Activated B cell treated with CpG ODN at 0.5 μM for 24 hours (primary cell): ENCODE measurements at regions of chr15 and their contacts with region 1.

Region 1: GRCh38 chr15:38129531-38130204 is 123.0 kb upstream of the SPRED1 start:
- DNase-seq: no peak
- ATAC-seq: peak; percentile 77
- H3K4me3 Mint-ChIP-seq: peak overlapping the region; percentile 71
- H3K27ac Mint-ChIP-seq: peak overlapping the region; percentile 1
- H3K4me1 Mint-ChIP-seq: peaks cover 23% of the 10 kb centered on the region
- H3K27me3 Mint-ChIP-seq: no peaks in the 10 kb centered on the region
- CTCF ChIP-seq: no peak

Region 2: DNA sequence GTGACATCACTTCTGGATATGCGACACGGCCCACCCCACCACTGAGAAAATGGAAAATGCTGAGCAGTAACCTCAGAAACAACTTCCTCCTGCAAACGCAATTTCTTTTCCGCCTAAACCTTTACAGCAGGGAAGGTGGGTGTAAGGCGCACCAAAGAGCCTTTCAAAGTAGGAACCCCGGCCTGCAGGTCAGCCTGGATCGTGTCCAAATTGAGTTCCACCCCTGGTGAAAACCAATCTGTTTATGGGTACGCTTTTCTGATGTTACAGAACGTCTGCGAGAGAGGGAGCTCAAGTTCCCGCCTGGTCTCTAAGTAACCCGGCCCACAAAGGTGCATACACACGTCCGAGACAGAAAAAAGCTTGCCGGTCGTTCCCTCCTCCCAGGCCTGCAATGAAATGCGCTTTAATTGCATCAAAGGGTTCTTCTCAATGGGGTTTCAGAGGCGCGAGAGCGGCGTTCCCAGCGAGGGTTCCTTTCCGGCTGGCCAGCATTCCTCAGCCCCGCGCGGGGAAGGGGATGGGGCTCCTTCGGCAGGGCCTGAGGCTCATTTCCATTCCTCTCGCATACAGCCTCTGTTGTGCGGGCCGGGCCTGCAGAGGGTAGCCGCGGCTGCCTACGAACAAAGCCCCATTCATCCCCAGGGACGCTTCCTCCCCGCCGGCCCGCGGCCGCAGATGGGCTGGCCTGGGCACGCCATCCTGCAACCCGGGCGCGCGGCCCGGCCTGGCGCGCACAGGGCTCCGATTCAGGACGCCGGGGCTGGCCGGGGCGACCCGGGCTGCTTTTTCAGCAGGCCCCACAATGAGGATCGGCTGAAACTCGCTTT is 57.1 kb before region 1 on chr15:
- CTCF ChIA-PET with region 1: no interaction called
- POLR2A ChIA-PET with region 1: no interaction called
- intact Hi-C with region 1: loop called (anchors 1 kb)
- DNase-seq: peak; percentile 37
- ATAC-seq: peak; percentile 63
- H3K4me3 Mint-ChIP-seq: peak overlapping the region; percentile 86
- H3K27ac Mint-ChIP-seq: peak overlapping the region; percentile 63
- H3K4me1 Mint-ChIP-seq: peaks cover 60% of the 10 kb centered on the region
- H3K27me3 Mint-ChIP-seq: peaks cover 11% of the 10 kb centered on the region
- CTCF ChIP-seq: no peak

Region 3: GRCh38 chr15:38084289-38084688 is 45.4 kb before region 1 on chr15:
- CTCF ChIA-PET with region 1: no interaction called
- POLR2A ChIA-PET with region 1: interaction called, 3 read pairs
- intact Hi-C with region 1: loop called (anchors 5 kb)
- DNase-seq: no peak
- ATAC-seq: peak; percentile 41
- H3K4me3 Mint-ChIP-seq: no peak overlapping the region
- H3K27ac Mint-ChIP-seq: peak overlapping the region; percentile 12
- H3K4me1 Mint-ChIP-seq: peaks cover 27% of the 10 kb centered on the region
- H3K27me3 Mint-ChIP-seq: peaks cover 4% of the 10 kb centered on the region
- CTCF ChIP-seq: no peak

Region 4: DNA sequence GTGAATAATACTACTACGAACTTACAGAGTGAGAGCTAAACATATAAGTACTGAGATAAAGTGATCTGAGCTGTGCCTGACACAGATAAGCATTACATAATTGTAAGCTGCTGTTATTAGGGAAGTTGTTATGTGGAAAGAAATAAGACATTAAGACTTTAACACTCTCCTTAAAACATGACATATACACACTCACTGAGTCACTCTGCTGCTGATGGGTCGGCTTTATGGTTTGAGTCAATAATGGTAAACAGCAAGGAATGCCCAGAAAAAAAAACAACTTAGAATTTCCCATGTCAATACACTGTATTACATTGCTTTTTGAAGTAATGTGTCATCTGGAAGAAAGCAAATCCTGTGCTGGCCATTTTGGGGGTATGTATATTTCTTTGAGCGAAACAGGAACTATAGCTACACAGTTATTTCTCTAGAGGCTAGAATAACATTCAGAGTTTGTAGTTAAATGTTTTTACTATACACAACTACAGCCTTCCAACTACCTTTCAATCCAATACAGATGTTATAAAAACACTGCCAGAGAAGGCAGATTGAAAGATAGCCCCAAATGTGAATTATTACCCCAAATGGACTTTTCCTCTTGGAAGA is 100.1 kb after region 1 on chr15:
- CTCF ChIA-PET with region 1: no interaction called
- POLR2A ChIA-PET with region 1: no interaction called
- intact Hi-C with region 1: loop called (anchors 5 kb)
- DNase-seq: no peak
- ATAC-seq: no peak
- H3K4me3 Mint-ChIP-seq: no peak overlapping the region
- H3K27ac Mint-ChIP-seq: no peak overlapping the region
- H3K4me1 Mint-ChIP-seq: no peaks in the 10 kb centered on the region
- H3K27me3 Mint-ChIP-seq: peaks cover 7% of the 10 kb centered on the region
- CTCF ChIP-seq: no peak